Activated CD4-positive, alpha-beta T cell treated with anti-CD3 and anti-CD28 coated beads for 36 hours (primary cell): ENCODE measurements at regions of chr12 and their contacts with region 1.

Region 1: GRCh38 chr12:1328391-1328790 is 266.0 kb downstream of the FBXL14 start:
- DNase-seq: no peak
- ATAC-seq: no peak
- H3K4me3 Mint-ChIP-seq: no peak overlapping the region
- H3K27ac Mint-ChIP-seq: no peak overlapping the region
- H3K4me1 Mint-ChIP-seq: peaks cover 19% of the 10 kb centered on the region
- H3K27me3 Mint-ChIP-seq: no peaks in the 10 kb centered on the region

Region 2: DNA sequence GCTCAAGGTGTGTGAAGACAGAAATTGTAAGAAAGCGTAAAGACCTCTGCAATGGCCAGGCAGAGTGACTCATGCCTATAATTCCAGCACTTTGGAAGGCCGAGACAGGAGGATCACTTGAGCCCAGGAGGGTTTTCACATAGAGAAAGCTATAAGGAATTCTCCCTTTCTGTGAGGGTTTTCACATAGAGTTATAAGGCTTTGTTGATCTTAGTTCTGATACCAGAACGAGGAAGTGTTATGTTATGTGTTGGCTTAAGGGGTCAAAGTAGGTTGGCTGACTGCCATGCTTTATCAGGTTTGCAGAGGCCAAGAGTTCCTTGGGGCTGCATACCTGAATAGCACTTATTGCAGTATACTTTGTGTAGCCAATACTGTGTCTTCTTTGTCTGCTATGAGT is 198.2 kb before region 1 on chr12:
- CTCF ChIA-PET with region 1: no interaction called
- POLR2A ChIA-PET with region 1: no interaction called
- intact Hi-C with region 1: loop called in 1 of 2 experiments (anchors 5 kb)
- DNase-seq: no peak
- ATAC-seq: no peak
- H3K4me3 Mint-ChIP-seq: no peak overlapping the region
- H3K27ac Mint-ChIP-seq: no peak overlapping the region
- H3K4me1 Mint-ChIP-seq: peaks cover 33% of the 10 kb centered on the region
- H3K27me3 Mint-ChIP-seq: no peaks in the 10 kb centered on the region

Region 3: DNA sequence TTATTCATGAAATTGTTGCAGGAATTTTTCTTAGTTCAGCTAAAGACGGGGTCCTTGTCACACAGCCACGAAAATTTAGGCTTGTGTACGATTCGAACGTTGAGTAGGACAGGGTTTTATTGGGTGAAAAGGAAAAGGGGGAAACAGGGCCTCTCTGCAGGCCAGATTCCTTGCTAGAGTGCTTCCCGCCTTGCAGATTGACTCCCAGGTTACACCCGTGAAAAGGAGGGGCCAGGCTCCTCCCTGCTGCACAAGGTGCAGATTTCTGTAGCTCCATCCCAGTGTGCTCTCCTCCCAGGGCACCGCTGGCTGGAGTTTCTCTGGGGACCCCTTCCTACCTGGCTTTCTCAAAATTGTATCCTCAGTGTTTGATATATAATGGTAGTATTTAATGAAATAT is 115.9 kb before region 1 on chr12:
- CTCF ChIA-PET with region 1: no interaction called
- POLR2A ChIA-PET with region 1: no interaction called
- intact Hi-C with region 1: loop called in 1 of 2 experiments (anchors 5 kb)
- DNase-seq: no peak
- ATAC-seq: no peak
- H3K4me3 Mint-ChIP-seq: no peak overlapping the region
- H3K27ac Mint-ChIP-seq: no peak overlapping the region
- H3K4me1 Mint-ChIP-seq: peaks cover 21% of the 10 kb centered on the region
- H3K27me3 Mint-ChIP-seq: no peaks in the 10 kb centered on the region

Region 4: GRCh38 chr12:1226951-1227350 is 101.4 kb before region 1 on chr12:
- CTCF ChIA-PET with region 1: no interaction called
- POLR2A ChIA-PET with region 1: no interaction called
- intact Hi-C with region 1: loop called in 1 of 2 experiments (anchors 1 kb)
- DNase-seq: no peak
- ATAC-seq: peak; percentile 83
- H3K4me3 Mint-ChIP-seq: no peak overlapping the region
- H3K27ac Mint-ChIP-seq: no peak overlapping the region
- H3K4me1 Mint-ChIP-seq: peaks cover 25% of the 10 kb centered on the region
- H3K27me3 Mint-ChIP-seq: no peaks in the 10 kb centered on the region

Region 5: GRCh38 chr12:1501695-1502378 is 173.4 kb after region 1 on chr12:
- CTCF ChIA-PET with region 1: no interaction called
- POLR2A ChIA-PET with region 1: no interaction called
- intact Hi-C with region 1: no loop called
- DNase-seq: no peak
- ATAC-seq: no peak
- H3K4me3 Mint-ChIP-seq: no peak overlapping the region
- H3K27ac Mint-ChIP-seq: no peak overlapping the region
- H3K4me1 Mint-ChIP-seq: peaks cover 13% of the 10 kb centered on the region
- H3K27me3 Mint-ChIP-seq: peaks cover 29% of the 10 kb centered on the region

Region 6: DNA sequence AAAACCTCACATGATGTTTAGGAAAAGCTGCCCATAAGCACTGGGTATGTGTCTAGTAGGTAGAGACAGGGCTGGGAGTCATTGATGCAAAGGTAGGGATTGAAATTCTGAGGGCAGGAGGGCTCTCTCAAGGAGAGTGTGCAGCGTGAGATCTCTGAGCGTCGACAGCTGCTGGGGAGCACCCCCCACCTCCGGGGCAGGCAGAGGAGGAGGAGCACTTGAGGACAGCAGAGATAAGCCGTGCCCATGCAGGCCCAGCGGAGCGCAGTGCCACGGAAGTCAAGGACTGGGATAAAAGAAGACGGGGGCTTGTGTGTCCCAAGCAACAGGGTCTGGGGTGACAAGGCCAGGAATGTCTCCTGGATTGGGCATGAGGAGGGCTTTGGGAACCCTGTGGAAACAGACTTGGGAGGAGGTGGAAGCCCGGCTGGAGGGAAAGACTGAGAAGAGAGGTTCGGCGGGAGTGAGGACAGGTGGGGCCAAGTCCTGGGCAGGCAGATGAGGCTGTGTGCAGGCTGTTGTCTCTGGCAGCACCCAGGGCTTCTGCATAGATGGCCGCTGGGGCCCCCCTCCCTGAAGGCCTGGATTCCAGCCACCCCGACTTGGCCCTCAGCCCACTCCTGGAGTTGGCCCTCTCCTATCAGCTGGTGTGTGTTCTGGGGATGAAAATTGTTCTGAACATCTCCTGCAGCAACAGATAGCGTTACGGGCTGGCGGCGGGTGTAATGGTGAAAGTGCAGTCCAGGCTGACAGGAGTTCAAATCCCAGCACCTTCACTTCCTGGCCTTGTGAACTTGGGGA is 588.2 kb after region 1 on chr12:
- CTCF ChIA-PET with region 1: no interaction called
- POLR2A ChIA-PET with region 1: no interaction called
- intact Hi-C with region 1: loop called in 1 of 2 experiments (anchors 10 kb)
- DNase-seq: peak; percentile 2
- ATAC-seq: no peak
- H3K4me3 Mint-ChIP-seq: no peak overlapping the region
- H3K27ac Mint-ChIP-seq: peak overlapping the region; percentile 74
- H3K4me1 Mint-ChIP-seq: peaks cover 16% of the 10 kb centered on the region
- H3K27me3 Mint-ChIP-seq: peaks cover 1% of the 10 kb centered on the region